ENCODE measurements at regions of chr9 and their contacts with region 1.

Region 1: DNA sequence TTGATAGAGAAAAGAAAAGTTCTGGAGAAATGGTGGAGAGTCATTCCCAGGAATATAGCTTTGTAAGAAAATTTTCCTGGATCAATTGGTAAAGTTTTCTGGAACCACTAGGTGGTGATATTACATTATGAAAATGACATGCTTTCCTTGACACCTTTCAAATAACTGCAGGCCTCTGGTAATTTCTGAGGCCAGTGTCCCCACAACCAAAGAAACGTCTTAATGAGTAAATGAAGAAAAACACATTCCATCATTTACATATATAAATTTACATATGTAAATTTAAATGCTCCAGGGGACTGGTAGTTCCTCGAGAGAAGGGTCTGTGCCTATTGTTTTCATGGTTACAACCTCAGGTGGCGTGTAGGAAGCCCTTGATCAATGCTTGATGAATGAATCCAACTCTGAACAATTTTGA is 17.2 kb upstream of the RGS3 start:
- DNase-seq: no peak
- ATAC-seq: peak; percentile 78

Region 2: DNA sequence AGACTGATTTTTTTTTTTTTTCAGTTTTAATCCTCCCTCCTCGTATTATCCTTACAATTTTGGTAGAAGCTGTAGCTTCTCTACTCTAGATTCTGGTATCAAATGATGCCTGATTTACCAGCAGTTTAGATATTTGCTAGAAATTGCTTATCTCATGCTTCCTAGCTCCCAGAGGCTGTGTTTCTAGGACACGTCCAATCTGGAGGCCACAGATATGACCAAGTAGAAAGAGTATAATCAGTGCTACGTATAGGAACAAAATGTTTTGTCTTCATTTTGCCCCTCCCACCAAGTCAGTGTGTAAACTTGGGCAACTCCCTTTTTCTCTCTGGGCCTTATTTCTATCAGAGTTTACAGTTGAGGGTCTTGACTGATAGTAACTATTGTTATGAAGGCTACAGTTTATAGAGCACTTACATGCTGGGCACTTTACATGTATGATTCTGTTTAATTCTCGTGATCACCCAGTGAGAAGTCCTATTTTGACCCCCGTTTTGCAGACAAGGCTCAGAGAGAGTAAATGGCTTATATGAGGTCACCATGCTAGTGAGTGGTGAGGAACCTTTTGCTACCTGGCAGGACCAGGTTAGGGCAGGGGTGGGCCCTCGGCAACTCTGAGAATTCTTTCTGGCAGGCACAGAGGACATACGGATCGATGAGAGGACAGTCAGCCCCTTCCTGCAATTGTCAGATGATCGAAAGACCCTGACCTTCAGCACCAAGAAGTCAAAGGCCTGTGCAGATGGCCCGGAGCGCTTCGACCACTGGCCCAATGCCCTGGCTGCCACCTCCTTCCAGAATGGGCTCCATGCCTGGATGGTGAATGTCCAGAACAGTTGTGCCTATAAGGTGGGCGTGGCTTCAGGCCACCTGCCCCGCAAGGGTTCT is 77.1 kb before region 1 on chr9:
- intact Hi-C with region 1: no loop called
- DNase-seq: no peak
- ATAC-seq: peak; percentile 38

Region 3: GRCh38 chr9:113387560-113388230 is 58.6 kb before region 1 on chr9:
- intact Hi-C with region 1: no loop called
- DNase-seq: no peak
- ATAC-seq: no peak

Region 4: DNA sequence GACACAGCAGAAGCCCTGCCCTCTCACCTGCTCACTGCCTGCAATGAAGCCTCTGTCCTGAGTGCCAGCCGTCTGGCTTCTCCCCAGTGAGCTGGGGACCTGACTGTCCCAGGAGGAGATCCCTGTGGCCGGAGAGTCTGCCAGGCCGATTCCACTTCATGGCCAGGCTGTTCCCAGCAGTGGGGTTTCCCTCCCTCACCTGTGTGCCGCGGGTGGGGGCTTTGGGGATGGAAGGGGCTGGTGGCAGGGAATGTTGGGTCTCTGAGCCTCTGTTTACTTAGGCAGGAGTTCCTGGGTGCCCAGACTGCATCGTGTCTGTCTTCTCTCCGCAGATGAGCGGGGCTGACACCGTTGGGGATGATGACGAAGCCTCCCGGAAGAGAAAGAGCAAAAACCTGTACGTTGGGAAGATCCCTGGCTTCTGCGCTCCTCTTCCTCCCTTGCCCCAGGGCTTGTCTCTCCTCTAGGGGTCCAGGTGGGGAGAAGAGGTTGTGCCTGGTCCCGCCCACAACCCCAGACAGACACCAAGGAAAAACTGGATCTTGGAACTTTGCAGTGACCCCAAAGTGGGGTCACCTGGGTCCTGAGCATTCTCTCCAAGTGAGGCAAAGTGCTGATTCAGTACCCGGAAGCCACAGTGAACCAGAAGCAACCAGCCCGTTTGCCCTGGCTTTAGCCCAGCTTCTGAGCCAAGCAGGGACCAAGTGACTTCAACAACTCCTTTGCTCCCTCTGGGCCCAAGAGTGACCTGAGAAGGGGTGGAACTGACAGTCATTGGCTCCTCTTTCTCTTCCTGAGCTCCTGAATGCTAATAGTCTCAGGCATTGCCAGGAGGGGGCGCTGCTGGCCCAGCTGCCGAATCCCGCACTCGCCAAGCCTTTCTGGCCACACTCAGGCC is 144.9 kb after region 1 on chr9:
- intact Hi-C with region 1: loop called (anchors 2 kb)
- DNase-seq: peak; percentile 89
- ATAC-seq: peak; percentile 44

Region 5: DNA sequence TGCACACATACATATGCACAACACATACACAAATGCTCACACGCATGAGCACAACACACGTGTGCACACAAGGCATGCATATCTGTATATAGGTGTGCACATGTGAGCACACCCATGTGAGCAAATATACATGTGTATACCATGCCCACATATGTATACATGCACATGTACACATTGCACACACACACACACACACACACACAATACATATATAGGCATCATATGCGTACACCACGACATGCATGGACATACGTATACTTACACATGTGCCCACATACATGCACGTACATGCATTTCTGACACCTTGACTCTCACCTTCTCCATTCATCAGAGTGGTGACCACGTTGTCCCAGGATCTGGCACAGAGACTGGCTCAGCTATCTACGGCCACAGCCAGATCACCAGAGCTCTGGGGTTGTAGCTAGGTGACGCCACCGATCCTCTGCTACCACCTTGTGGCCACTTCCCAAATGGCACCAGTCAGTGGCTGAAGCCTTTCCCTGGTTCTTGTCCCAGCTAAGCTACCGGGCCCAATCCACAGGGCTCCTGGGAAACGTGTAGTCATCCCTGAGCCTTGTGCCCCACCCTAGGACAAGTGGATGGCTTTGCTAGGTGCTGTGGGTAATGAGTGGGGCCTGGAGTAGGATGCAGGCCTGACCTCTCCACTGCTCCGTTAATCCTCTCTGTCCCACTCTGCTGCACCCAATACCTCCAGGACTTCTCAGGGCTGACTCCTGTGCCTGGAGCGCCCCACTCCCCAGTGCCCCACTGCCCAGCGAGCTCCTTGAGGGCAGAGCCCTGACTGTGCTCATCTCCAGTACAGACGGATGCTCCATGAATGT is 211.6 kb after region 1 on chr9:
- intact Hi-C with region 1: loop called (anchors 2 kb)
- DNase-seq: peak; percentile 88
- ATAC-seq: peak; percentile 82